ENCODE measurements at regions of chr19 and their contacts with region 1.

Region 1: DNA sequence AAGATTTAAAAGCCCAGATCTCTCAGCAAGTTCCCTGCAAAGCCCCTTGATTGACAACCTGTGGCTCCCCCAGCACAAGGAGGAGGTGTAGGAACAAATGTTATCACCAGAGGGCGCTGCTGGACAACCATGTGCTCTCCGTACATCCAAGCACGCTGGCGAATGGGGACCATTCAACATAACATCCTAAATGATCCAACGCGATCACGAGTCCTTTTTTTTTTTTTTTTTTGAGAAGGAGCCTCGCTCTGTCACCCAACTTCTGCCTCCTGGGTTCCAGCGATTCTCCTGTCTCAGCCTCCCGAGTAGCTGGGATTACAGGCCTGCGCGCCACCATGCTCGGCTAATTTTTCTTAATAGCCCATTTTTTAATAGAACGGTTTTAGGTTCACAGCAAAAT is 52.0 kb downstream of the NWD1 start:
- DNase-seq: peak; percentile 66
- ATAC-seq: peak; percentile 78
- H3K4me3 ChIP-seq: no peak overlapping the region
- H3K27ac ChIP-seq: no peak overlapping the region
- H3K4me1 ChIP-seq: no peaks in the 10 kb centered on the region
- H3K27me3 ChIP-seq: no peaks in the 10 kb centered on the region; a peak in 1 of 5 replicates
- CTCF ChIP-seq: peak; percentile 88
- EP300 ChIP-seq: no peak
- POLR2A ChIP-seq: no peak
- RAD21 ChIP-seq: peak; percentile 69

Region 2: DNA sequence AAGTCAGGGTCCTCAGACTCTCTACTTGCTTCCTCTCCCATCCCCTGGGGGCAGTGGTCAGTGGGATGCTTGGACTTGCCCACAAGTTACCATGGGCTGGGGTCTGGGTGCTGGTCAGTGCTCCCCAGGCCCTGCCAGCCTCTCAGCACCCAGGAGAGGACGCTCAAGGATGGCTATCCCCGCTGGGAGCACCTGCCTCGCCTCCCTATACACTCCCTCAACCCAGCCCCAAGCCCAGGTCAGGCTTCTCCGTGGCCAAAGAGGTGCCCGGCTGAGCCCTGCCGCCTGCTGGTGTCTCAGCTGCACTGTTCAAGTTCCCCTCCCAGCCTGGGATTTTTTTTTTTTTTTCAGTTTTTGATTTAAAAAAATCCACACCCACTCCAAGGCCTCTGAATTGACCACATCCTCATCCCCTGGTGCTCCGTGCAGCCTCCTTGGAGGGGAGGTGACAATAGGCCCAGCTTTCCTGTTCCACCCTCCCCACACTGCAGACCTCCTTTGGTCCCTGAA is 128.0 kb after region 1 on chr19:
- CTCF ChIA-PET with region 1: interaction called, 10 read pairs
- POLR2A ChIA-PET with region 1: no interaction called
- in situ Hi-C with region 1: loop called (anchors 10 kb)
- intact Hi-C with region 1: loop called (anchors 1 kb)
- DNase-seq: peak; percentile 22
- ATAC-seq: peak; percentile 61
- H3K4me3 ChIP-seq: no peak overlapping the region
- H3K27ac ChIP-seq: no peak overlapping the region
- H3K4me1 ChIP-seq: peaks cover 19% of the 10 kb centered on the region
- H3K27me3 ChIP-seq: peaks cover 2 to 17% of the 10 kb centered on the region in 2 experiments; a peak in 4 of 5 replicates
- CTCF ChIP-seq: peak; percentile 73
- EP300 ChIP-seq: no peak
- POLR2A ChIP-seq: no peak
- RAD21 ChIP-seq: peak; percentile 74

Region 3: GRCh38 chr19:17052439-17053210 is 281.0 kb after region 1 on chr19:
- CTCF ChIA-PET with region 1: interaction called, 15 read pairs
- POLR2A ChIA-PET with region 1: no interaction called
- in situ Hi-C with region 1: loop called (anchors 10 kb)
- intact Hi-C with region 1: loop called (anchors 5 kb)
- DNase-seq: no peak
- ATAC-seq: peak; percentile 68
- H3K4me3 ChIP-seq: no peak overlapping the region
- H3K27ac ChIP-seq: no peak overlapping the region
- H3K4me1 ChIP-seq: no peaks in the 10 kb centered on the region
- H3K27me3 ChIP-seq: no peaks in the 10 kb centered on the region; a peak in 1 of 5 replicates
- CTCF ChIP-seq: peak; percentile 66
- EP300 ChIP-seq: no peak
- POLR2A ChIP-seq: no peak
- RAD21 ChIP-seq: 0 out of 2 replicates have a peak, but pooled peaks have one; percentile 14